ENCODE measurements at regions of chr7 and their contacts with region 1.

Region 1: GRCh38 chr7:103148994-103149807 is at the start of gene NAPEPLD:
- DNase-seq: peak; percentile 75

Region 2: GRCh38 chr7:103037476-103037822 is 111.8 kb before region 1 on chr7:
- CTCF ChIA-PET with region 1: no interaction called
- POLR2A ChIA-PET with region 1: no interaction called
- DNase-seq: no peak

Region 3: DNA sequence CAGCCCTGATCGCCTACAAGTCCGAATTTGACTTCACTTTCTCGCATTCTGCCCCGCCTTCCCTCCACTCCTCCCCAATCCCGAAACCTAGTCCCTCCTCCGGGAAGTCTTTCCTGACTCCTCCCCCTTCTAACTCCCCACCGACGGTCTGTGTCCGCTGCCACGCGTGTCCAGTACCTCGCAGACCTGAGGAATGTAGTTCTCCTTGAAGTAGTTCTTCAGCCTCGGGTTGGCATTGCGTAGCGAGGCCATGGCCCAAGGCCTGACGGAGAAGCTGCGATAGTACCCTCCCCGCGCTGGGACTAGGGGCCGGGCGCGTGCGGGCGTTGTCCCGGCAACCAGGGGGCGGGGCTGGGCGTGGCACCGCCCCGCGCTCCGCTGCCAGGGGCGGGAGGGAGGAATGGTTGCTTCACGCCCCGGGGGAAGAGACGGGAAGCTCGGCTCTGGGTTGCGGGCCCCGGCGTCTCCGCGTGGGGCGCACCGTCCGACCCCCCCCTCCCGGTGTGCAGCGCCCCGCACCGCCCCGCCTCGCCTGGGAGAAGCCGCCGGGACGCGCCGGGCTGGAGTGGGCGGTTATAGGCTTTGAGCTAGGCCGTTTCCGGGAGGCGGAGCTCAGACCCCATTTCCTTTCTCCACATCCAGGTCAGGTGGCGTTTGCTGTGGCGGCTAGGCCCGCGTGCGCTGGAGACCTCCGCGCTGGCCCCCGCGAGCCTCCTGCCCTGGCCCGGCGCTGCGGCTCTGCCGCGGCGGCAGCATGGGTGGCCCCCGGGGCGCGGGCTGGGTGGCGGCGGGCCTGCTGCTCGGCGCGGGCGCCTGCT is 74.5 kb before region 1 on chr7 and contains the starts of genes ARMC10 and FBXL13:
- CTCF ChIA-PET with region 1: interaction called, 3 read pairs
- POLR2A ChIA-PET with region 1: interaction called, 14 read pairs
- DNase-seq: peak; percentile 91

Region 4: GRCh38 chr7:103347507-103348267 is 198.5 kb after region 1 on chr7 and contains the start of gene PSMC2:
- CTCF ChIA-PET with region 1: no interaction called
- POLR2A ChIA-PET with region 1: no interaction called
- DNase-seq: peak; percentile 75

Measured in HEK293T (cell line).